ENCODE measurements at regions of chr14 and their contacts with region 1.

Region 1: DNA sequence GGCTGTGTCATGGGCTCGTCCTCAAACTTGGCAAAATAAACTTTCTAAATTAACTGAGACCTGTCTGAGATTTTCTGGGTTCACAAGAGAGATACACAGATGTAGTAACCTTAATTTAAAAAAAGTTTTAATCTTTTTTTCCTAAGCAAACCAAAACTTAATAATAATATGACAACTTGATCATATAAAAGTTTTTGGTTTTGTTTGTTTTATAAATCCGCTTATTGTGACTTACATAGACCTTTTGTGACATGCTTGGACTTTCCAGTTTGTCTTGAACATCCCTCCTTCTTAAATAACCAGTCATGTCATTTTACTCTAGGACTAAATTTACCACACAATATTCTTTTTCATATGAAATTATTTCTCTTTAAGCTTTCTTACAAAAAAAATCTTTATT is 8.5 kb downstream of the RDH12 start:
- DNase-seq: no peak
- ATAC-seq: no peak
- H3K4me3 ChIP-seq: no peak overlapping the region
- H3K27ac ChIP-seq: no peak overlapping the region
- H3K4me1 ChIP-seq: no peaks in the 10 kb centered on the region
- H3K27me3 ChIP-seq: no peaks in the 10 kb centered on the region
- CTCF ChIP-seq: no peak
- EP300 ChIP-seq: no peak
- POLR2A ChIP-seq: no peak
- RAD21 ChIP-seq: no peak

Region 2: GRCh38 chr14:67636361-67636919 is 73.8 kb before region 1 on chr14:
- CTCF ChIA-PET with region 1: interaction called, 13 read pairs
- POLR2A ChIA-PET with region 1: interaction called, 10 read pairs
- RAD21 ChIA-PET with region 1: no interaction called
- SMC1A ChIA-PET with region 1: no interaction called
- in situ Hi-C with region 1: no loop called
- intact Hi-C with region 1: no loop called
- DNase-seq: peak; percentile 39
- ATAC-seq: peak; percentile 59
- H3K4me3 ChIP-seq: no peak overlapping the region
- H3K27ac ChIP-seq: no peak overlapping the region
- H3K4me1 ChIP-seq: no peaks in the 10 kb centered on the region
- H3K27me3 ChIP-seq: no peaks in the 10 kb centered on the region
- CTCF ChIP-seq: no peak
- EP300 ChIP-seq: no peak
- POLR2A ChIP-seq: no peak
- RAD21 ChIP-seq: no peak

Region 3: GRCh38 chr14:67784244-67784823 is 74.1 kb after region 1 on chr14:
- CTCF ChIA-PET with region 1: no interaction called
- POLR2A ChIA-PET with region 1: no interaction called
- RAD21 ChIA-PET with region 1: no interaction called
- SMC1A ChIA-PET with region 1: no interaction called
- in situ Hi-C with region 1: no loop called
- intact Hi-C with region 1: no loop called
- DNase-seq: no peak
- ATAC-seq: no peak
- H3K4me3 ChIP-seq: no peak overlapping the region
- H3K27ac ChIP-seq: no peak overlapping the region
- H3K4me1 ChIP-seq: no peaks in the 10 kb centered on the region
- H3K27me3 ChIP-seq: no peaks in the 10 kb centered on the region
- CTCF ChIP-seq: no peak
- EP300 ChIP-seq: no peak
- POLR2A ChIP-seq: no peak
- RAD21 ChIP-seq: no peak

Region 4: DNA sequence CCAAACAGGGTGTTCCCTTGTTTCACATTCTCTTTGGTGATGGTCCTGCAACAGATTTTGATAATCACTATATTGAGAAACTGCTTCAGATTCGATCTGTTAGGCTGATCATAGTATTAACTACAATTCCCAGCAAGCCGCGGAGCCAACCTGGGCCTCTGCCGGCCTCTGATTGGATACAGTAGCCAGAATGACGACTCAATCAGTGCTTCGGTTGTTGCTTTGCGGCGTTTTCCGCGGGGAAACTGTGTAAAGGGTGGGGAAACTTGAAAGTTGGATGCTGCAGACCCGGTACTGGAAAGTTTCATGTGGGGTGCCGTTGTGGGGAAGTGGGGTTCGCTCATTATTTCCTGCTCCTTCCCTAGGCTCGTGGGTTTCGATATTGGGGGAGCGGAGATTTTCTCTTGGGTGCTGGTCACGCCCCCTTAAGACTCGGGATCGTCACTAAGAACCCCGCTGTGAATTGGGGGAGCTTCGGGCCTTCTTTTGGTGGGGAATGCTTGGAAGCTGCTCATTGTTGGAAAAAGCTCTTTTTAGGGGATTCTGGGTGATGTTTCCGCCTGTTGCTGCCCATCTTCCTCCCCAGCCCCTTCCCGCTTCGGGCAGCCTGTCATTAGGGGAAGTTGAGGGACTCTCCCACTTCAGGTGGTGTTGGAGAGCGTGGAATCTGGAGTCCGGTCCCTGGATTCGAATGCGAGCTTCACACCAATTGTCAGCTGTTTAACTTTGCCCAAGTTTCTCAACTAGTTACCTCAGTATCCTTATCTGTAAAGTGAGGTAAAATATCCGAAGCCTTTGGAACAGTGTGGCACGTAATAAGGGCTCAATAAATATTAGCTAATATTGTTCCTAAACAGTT is 109.6 kb after region 1 on chr14 and contains the start of gene RAD51B:
- CTCF ChIA-PET with region 1: no interaction called
- POLR2A ChIA-PET with region 1: interaction called, 10 read pairs
- RAD21 ChIA-PET with region 1: no interaction called
- SMC1A ChIA-PET with region 1: no interaction called
- in situ Hi-C with region 1: no loop called
- intact Hi-C with region 1: no loop called
- DNase-seq: peak; percentile 77
- ATAC-seq: peak; percentile 82
- H3K4me3 ChIP-seq: peak within 1 kb of the TSS; percentile 85
- H3K27ac ChIP-seq: peak within 1 kb of the TSS; percentile 94
- H3K4me1 ChIP-seq: peaks cover 13% of the 10 kb centered on the region
- H3K27me3 ChIP-seq: no peaks in the 10 kb centered on the region
- CTCF ChIP-seq: no peak
- EP300 ChIP-seq: no peak
- POLR2A ChIP-seq: no peak; the same call in 1 of the 2 replicates
- RAD21 ChIP-seq: no peak
- polyA plus RNA-seq, gene RAD51B: 16.3 to 19.3 TPM

Region 5: GRCh38 chr14:67852926-67853604 is 142.9 kb after region 1 on chr14:
- CTCF ChIA-PET with region 1: no interaction called
- POLR2A ChIA-PET with region 1: no interaction called
- RAD21 ChIA-PET with region 1: no interaction called
- SMC1A ChIA-PET with region 1: no interaction called
- in situ Hi-C with region 1: no loop called
- intact Hi-C with region 1: no loop called
- DNase-seq: peak; percentile 13
- ATAC-seq: peak; percentile 80
- H3K4me3 ChIP-seq: no peak overlapping the region
- H3K27ac ChIP-seq: peak overlapping the region; percentile 50
- H3K4me1 ChIP-seq: peaks cover 10% of the 10 kb centered on the region
- H3K27me3 ChIP-seq: no peaks in the 10 kb centered on the region
- CTCF ChIP-seq: no peak
- EP300 ChIP-seq: no peak
- POLR2A ChIP-seq: no peak
- RAD21 ChIP-seq: no peak

Region 6: DNA sequence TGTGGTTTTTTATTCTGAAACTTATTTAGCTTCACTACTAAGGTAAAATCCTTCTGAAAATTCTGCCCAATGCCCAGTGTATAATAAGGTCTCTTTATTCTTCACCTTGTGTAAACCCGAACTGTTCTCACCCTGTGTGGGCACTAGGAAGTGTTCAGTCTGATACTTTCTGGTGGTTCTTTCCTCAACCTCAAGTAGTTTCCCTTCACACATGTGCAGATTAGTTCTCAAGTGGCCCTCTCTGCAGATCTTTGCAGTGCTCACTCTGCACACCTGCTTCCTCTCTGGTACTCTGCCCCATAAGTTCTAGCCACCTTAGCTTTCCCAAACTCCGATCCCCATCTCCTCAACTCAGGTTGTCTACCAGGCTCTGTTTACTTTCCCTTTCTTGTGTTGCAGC is 171.0 kb after region 1 on chr14:
- CTCF ChIA-PET with region 1: no interaction called
- POLR2A ChIA-PET with region 1: no interaction called
- RAD21 ChIA-PET with region 1: no interaction called
- SMC1A ChIA-PET with region 1: no interaction called
- in situ Hi-C with region 1: no loop called
- intact Hi-C with region 1: no loop called
- DNase-seq: peak; percentile 81
- ATAC-seq: peak; percentile 100
- H3K4me3 ChIP-seq: no peak overlapping the region
- H3K27ac ChIP-seq: no peak overlapping the region
- H3K4me1 ChIP-seq: peaks cover 17% of the 10 kb centered on the region
- H3K27me3 ChIP-seq: no peaks in the 10 kb centered on the region
- CTCF ChIP-seq: no peak
- EP300 ChIP-seq: peak; percentile 63 to 67; a peak in 3 of 4 replicates
- POLR2A ChIP-seq: no peak
- RAD21 ChIP-seq: no peak